GM12878 (cell line): ENCODE measurements at regions of chr15 and their contacts with region 1.

Region 1: GRCh38 chr15:52331490-52332240 is 36.1 kb upstream of the MYO5C start:
- DNase-seq: peak; percentile 87
- ATAC-seq: peak; percentile 99
- H3K4me3 ChIP-seq: no peak overlapping the region
- H3K27ac ChIP-seq: peak overlapping the region; percentile 22
- H3K4me1 ChIP-seq: peaks cover 15% of the 10 kb centered on the region
- H3K27me3 ChIP-seq: no peaks in the 10 kb centered on the region
- CTCF ChIP-seq: peak; percentile 59 to 90 (median 78)
- EP300 ChIP-seq: no peak
- POLR2A ChIP-seq: no peak
- RAD21 ChIP-seq: peak; percentile 96

Region 2: DNA sequence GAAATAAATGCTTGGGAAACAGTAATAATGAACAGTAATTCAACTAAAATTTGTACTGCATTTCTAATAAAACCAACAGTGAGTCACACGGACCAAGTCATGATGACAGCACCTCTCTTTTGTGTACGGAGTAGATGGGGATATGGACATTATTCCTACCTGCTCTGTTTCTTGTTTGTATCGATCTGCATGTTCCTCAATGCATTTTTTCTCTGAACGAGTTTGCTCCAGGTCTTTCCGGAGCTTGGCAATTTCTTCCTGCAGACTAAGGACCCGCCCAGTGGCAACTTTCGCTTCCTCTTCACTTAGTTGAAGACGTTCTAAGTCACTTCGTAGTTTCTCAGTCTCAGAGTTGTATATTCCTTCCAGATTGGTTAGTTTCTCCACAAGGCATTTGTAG is 38.3 kb after region 1 on chr15:
- CTCF ChIA-PET with region 1: interaction called, 3 read pairs
- POLR2A ChIA-PET with region 1: no interaction called
- RAD21 ChIA-PET with region 1: interaction called, 3 read pairs
- SMC1A ChIA-PET with region 1: interaction called, 12 read pairs
- in situ Hi-C with region 1: no loop called
- intact Hi-C with region 1: no loop called
- DNase-seq: no peak
- ATAC-seq: peak; percentile 83
- H3K4me3 ChIP-seq: no peak overlapping the region
- H3K27ac ChIP-seq: peak overlapping the region; percentile 5; the same call in 1 of the 2 replicates
- H3K4me1 ChIP-seq: peaks cover 3% of the 10 kb centered on the region; the same call in 1 of the 2 replicates
- H3K27me3 ChIP-seq: no peaks in the 10 kb centered on the region
- CTCF ChIP-seq: no peak
- EP300 ChIP-seq: no peak
- POLR2A ChIP-seq: no peak
- RAD21 ChIP-seq: no peak

Region 3: DNA sequence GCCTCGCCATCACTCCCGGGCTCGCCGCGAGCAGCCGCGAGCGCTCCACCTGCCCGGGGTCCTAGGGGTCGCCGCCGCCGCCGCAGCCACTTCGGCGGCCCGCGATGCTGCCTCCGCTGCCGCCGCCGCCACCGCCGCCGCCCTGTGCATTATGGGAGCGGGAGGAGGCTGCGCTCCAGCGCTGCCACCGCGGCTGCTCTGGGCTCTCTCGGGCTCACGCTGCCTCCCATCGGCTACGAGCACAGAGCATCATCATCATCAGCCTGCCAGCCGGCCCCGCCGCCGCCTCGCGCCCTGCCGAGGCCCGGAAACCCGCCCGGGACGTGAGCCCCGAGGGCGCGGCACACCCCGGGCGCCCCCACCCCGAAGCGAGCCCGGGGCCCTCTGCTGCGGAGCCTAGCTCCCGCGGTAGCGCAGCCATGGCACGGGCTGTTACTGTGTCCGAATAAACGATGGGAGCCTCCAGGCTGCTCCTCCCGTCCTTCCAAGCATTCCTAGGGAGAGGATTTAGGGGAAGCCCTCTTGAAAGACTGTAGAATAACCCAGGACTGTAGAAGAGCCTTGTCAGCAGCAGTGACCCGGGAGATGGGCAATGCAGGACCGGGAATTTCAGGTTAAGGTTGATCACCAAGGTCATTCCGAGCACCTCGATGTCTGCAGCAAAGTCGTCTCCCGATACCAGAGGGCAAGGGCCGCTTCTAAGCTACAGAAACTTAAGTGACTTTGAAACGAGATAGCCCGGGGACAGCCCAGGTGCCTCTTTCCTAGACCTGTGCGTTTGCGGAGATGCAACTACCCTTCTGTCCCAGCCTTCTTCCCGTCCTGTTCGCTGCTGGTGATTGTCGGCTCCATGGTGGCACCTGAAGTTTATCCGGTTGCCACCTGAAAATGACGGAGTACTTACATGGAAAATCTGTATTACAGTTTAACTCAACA is 197.6 kb after region 1 on chr15:
- CTCF ChIA-PET with region 1: interaction called, 20 read pairs
- POLR2A ChIA-PET with region 1: no interaction called
- RAD21 ChIA-PET with region 1: interaction called, 7 read pairs
- SMC1A ChIA-PET with region 1: interaction called, 12 read pairs
- in situ Hi-C with region 1: no loop called
- intact Hi-C with region 1: loop called (anchors 5 kb)
- DNase-seq: no peak
- ATAC-seq: peak; percentile 83
- H3K4me3 ChIP-seq: peak overlapping the region; percentile 85
- H3K27ac ChIP-seq: peak overlapping the region; percentile 39; the same call in 1 of the 2 replicates
- H3K4me1 ChIP-seq: peaks cover 3% of the 10 kb centered on the region
- H3K27me3 ChIP-seq: no peaks in the 10 kb centered on the region
- CTCF ChIP-seq: peak in 1 of 3 experiments; percentile 35; a peak in 2 of 6 replicates
- EP300 ChIP-seq: no peak
- POLR2A ChIP-seq: 0 out of 2 replicates have a peak, but pooled peaks have one; percentile 18
- RAD21 ChIP-seq: peak; percentile 46

Region 4: GRCh38 chr15:52568601-52569256 is 237.1 kb after region 1 on chr15 and contains the start of gene ARPP19:
- CTCF ChIA-PET with region 1: interaction called, 6 read pairs
- POLR2A ChIA-PET with region 1: no interaction called
- RAD21 ChIA-PET with region 1: interaction called, 8 read pairs
- SMC1A ChIA-PET with region 1: interaction called, 11 read pairs
- in situ Hi-C with region 1: no loop called
- intact Hi-C with region 1: loop called (anchors 2 kb)
- DNase-seq: peak; percentile 69
- ATAC-seq: peak; percentile 81
- H3K4me3 ChIP-seq: peak within 1 kb of the TSS; percentile 72
- H3K27ac ChIP-seq: peak within 1 kb of the TSS; percentile 93
- H3K4me1 ChIP-seq: peaks cover 7% of the 10 kb centered on the region
- H3K27me3 ChIP-seq: no peaks in the 10 kb centered on the region
- CTCF ChIP-seq: peak in 1 of 3 experiments; percentile 39; a peak in 2 of 6 replicates
- EP300 ChIP-seq: no peak
- POLR2A ChIP-seq: peak; percentile 81
- RAD21 ChIP-seq: peak; percentile 34
- polyA plus RNA-seq, gene ARPP19: 77.2 to 114 TPM

Region 5: GRCh38 chr15:52730173-52730572 is 398.5 kb after region 1 on chr15:
- CTCF ChIA-PET with region 1: interaction called, 47 read pairs
- POLR2A ChIA-PET with region 1: no interaction called
- RAD21 ChIA-PET with region 1: interaction called, 49 read pairs
- SMC1A ChIA-PET with region 1: interaction called, 50 read pairs
- in situ Hi-C with region 1: loop called (anchors 5 kb)
- intact Hi-C with region 1: loop called (anchors 1 kb)
- DNase-seq: peak; percentile 28
- ATAC-seq: peak; percentile 80
- H3K4me3 ChIP-seq: no peak overlapping the region; the same call in 1 of the 2 replicates
- H3K27ac ChIP-seq: no peak overlapping the region
- H3K4me1 ChIP-seq: peaks cover 9% of the 10 kb centered on the region; the same call in 1 of the 2 replicates
- H3K27me3 ChIP-seq: no peaks in the 10 kb centered on the region
- CTCF ChIP-seq: 0 out of 6 replicates have a peak, but pooled peaks of 1 of the 3 experiments have one; percentile 6
- EP300 ChIP-seq: no peak
- POLR2A ChIP-seq: no peak
- RAD21 ChIP-seq: peak; percentile 36; the same call in 1 of the 2 replicates